ENCODE measurements at regions of chr2 and their contacts with region 1.

Region 1: GRCh38 chr2:139685041-139685983 is 905.1 kb upstream of the NXPH2 start:
- DNase-seq: no peak

Region 2: GRCh38 chr2:138493334-138493733 is 1192.0 kb before region 1 on chr2:
- intact Hi-C with region 1: loop called in 1 of 2 experiments (anchors 5 kb)
- DNase-seq: no peak

Region 3: DNA sequence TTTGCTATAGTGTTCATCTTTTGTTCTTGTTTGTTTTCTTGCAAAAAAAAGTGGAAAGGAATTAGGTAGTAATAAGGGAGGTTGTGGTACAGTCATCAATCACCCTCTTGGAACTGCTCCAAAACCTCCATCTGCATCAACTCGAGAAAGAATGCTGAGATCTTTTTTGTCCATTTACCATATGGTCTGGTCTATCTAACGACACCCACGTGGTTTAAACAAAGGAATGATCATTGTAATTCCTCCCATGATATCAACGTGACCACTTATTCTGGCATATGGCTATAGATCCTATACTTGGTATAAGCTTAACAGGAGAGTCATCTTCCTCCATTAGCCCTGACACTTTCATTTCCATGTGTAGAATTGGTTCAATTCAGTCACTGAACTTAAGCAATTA is 120.1 kb after region 1 on chr2:
- intact Hi-C with region 1: no loop called
- DNase-seq: no peak